ENCODE measurements at regions of chr20 and their contacts with region 1.

Region 1: GRCh38 chr20:33686100-33686983 is at the start of gene E2F1:
- H3K4me3 Mint-ChIP-seq: peak within 1 kb of the TSS; percentile 75
- H3K27ac Mint-ChIP-seq: peak within 1 kb of the TSS; percentile 79
- H3K4me1 Mint-ChIP-seq: peaks cover 31% of the 10 kb centered on the region
- H3K27me3 Mint-ChIP-seq: no peaks in the 10 kb centered on the region

Region 2: GRCh38 chr20:33719989-33720709 is 33.8 kb after region 1 on chr20 and contains the start of gene PXMP4:
- intact Hi-C with region 1: loop called (anchors 2 kb)
- H3K4me3 Mint-ChIP-seq: peak within 1 kb of the TSS; percentile 88
- H3K27ac Mint-ChIP-seq: peak within 1 kb of the TSS; percentile 75
- H3K4me1 Mint-ChIP-seq: peaks cover 26% of the 10 kb centered on the region
- H3K27me3 Mint-ChIP-seq: no peaks in the 10 kb centered on the region

Measured in dendritic cell treated with granulocyte-macrophage colony-stimulating factor and Interleukin-4, amounts not matched to agents 40 ng/mL and 50 ng/mL, for 4 days (primary cell).